ENCODE measurements at regions of chr4 and their contacts with region 1.

Region 1: GRCh38 chr4:14934704-14935390 is 67.4 kb upstream of the CPEB2 start:
- DNase-seq: no peak
- ATAC-seq: no peak
- H3K4me3 ChIP-seq: no peak overlapping the region
- H3K4me3 Mint-ChIP-seq: no peak overlapping the region
- H3K27ac ChIP-seq: no peak overlapping the region
- H3K27ac Mint-ChIP-seq: no peak overlapping the region
- H3K4me1 ChIP-seq: no peaks in the 10 kb centered on the region
- H3K4me1 Mint-ChIP-seq: no peaks in the 10 kb centered on the region
- H3K27me3 ChIP-seq: no peaks in the 10 kb centered on the region
- H3K27me3 Mint-ChIP-seq: peaks cover 38% of the 10 kb centered on the region
- CTCF ChIP-seq: no peak

Region 2: DNA sequence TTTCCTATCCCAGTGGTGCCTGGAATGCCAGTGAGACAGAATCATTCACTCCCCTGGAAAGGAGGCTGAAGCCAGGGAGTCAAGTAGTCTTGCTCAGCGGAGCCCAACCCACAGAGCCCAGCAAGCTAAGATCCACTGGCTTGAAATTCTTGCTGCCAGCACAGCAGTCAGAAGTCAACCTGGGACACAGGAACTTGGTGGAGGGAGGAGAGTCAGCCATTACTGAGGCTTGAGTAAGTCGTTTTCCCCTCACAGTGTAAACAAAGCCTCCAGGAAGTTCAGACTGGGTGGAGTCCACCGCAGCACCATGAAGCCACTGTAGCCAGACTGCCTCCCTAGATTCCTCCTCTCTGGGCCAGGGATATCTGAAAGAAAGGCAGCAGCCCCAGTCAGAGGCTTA is 215.8 kb before region 1 on chr4:
- CTCF ChIA-PET with region 1: no interaction called
- POLR2A ChIA-PET with region 1: no interaction called
- intact Hi-C with region 1: no loop called
- DNase-seq: no peak
- ATAC-seq: no peak
- H3K4me3 ChIP-seq: no peak overlapping the region
- H3K4me3 Mint-ChIP-seq: no peak overlapping the region
- H3K27ac ChIP-seq: no peak overlapping the region
- H3K27ac Mint-ChIP-seq: no peak overlapping the region
- H3K4me1 ChIP-seq: no peaks in the 10 kb centered on the region
- H3K4me1 Mint-ChIP-seq: no peaks in the 10 kb centered on the region
- H3K27me3 ChIP-seq: no peaks in the 10 kb centered on the region
- H3K27me3 Mint-ChIP-seq: peaks cover 10% of the 10 kb centered on the region
- CTCF ChIP-seq: no peak

Region 3: DNA sequence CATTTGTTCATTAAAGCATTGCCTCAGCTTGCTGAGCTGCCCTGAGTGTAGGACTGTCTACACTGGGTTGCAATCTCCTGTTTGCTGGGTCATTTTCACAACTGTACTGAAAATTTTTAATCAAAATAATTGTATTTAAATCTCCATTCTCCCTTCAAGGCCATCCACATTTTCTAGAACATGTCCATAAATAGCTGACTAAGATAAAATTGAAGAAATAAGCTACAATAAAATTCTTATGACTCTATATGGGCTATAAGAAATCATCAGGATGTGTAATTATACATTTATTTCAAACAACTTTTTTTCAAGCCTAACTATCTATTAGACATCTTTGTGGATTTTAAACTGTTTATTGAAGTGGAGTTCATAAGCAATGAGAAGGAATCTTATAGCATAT is 205.2 kb before region 1 on chr4:
- CTCF ChIA-PET with region 1: no interaction called
- POLR2A ChIA-PET with region 1: no interaction called
- intact Hi-C with region 1: loop called in 1 of 2 experiments (anchors 5 kb)
- DNase-seq: no peak
- ATAC-seq: no peak
- H3K4me3 ChIP-seq: no peak overlapping the region
- H3K4me3 Mint-ChIP-seq: no peak overlapping the region
- H3K27ac ChIP-seq: no peak overlapping the region
- H3K27ac Mint-ChIP-seq: no peak overlapping the region
- H3K4me1 ChIP-seq: no peaks in the 10 kb centered on the region
- H3K4me1 Mint-ChIP-seq: no peaks in the 10 kb centered on the region
- H3K27me3 ChIP-seq: no peaks in the 10 kb centered on the region
- H3K27me3 Mint-ChIP-seq: no peaks in the 10 kb centered on the region
- CTCF ChIP-seq: no peak

Region 4: GRCh38 chr4:15054541-15054940 is 119.7 kb after region 1 on chr4:
- CTCF ChIA-PET with region 1: no interaction called
- POLR2A ChIA-PET with region 1: no interaction called
- intact Hi-C with region 1: no loop called
- DNase-seq: no peak
- ATAC-seq: no peak
- H3K4me3 ChIP-seq: no peak overlapping the region
- H3K4me3 Mint-ChIP-seq: no peak overlapping the region
- H3K27ac ChIP-seq: no peak overlapping the region
- H3K27ac Mint-ChIP-seq: no peak overlapping the region
- H3K4me1 ChIP-seq: no peaks in the 10 kb centered on the region
- H3K4me1 Mint-ChIP-seq: peaks cover 2% of the 10 kb centered on the region
- H3K27me3 ChIP-seq: no peaks in the 10 kb centered on the region
- H3K27me3 Mint-ChIP-seq: no peaks in the 10 kb centered on the region
- CTCF ChIP-seq: no peak